ENCODE measurements at regions of chr17 and their contacts with region 1.

Region 1: GRCh38 chr17:47850692-47851573 is at the start of gene SP6:
- DNase-seq: peak; percentile 90
- ATAC-seq: peak; percentile 67
- H3K4me3 Mint-ChIP-seq: peak within 1 kb of the TSS; percentile 78
- H3K27ac Mint-ChIP-seq: no peak within 1 kb of the TSS
- H3K4me1 Mint-ChIP-seq: peaks cover 46% of the 10 kb centered on the region
- H3K27me3 Mint-ChIP-seq: peaks cover 92% of the 10 kb centered on the region
- CTCF ChIP-seq: no peak
- total RNA-seq, gene SP6: 2.0 to 3.3 TPM (median 2.3 TPM) in 3 replicates

Region 2: DNA sequence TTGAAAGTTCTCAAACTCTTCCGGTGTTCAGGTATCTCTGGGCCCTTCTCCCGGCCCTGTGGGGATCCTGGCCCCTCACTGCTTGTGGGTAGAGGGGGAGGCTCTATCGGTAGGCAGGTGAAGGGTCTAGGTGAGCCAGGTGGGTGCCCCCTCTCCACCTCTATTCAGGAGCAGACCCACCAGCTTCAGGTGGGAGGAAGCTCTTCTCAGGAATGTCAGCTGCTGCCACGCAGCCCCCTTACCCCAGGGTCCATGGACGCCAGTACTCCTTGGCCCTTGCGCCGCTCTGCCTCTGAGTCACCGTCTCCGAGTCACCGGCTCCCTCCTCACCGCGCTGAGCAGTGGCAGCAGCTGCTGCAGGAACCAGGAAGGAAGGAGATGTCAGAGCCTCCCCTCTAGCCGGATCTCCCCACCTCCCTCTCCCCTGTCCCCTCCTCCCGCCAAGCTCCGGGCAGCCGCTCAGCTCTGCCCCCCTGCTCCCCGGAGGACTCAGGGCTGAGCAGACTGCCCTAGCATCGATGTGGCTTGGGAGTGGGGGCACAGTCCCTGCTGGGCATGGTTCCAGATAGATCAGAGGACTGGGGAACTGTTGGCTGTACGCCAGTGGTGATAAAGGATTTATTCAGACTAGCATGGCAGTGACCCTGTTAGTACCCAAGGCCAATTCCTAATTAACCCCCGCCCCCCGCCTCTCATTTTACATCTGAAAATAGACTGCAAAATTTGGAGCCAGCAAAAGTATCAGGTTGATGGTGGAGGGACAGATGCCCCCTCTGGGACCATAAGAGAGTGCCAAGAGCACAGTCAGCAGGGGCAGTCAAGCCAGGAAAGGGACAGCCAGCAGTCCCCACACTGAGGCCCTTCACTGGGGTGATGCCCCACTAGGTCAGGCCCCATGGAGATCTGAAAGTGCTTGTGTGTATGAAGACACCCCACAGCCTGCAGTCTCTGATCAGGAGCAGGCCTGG is 29.2 kb before region 1 on chr17 and contains the start of gene OSBPL7:
- CTCF ChIA-PET with region 1: interaction called, 19 read pairs
- POLR2A ChIA-PET with region 1: no interaction called
- DNase-seq: peak; percentile 69
- ATAC-seq: peak; percentile 97
- H3K4me3 Mint-ChIP-seq: peak within 1 kb of the TSS; percentile 95
- H3K27ac Mint-ChIP-seq: no peak within 1 kb of the TSS; the same call in 1 of the 2 replicates
- H3K4me1 Mint-ChIP-seq: peaks cover 20% of the 10 kb centered on the region
- H3K27me3 Mint-ChIP-seq: no peaks in the 10 kb centered on the region
- CTCF ChIP-seq: no peak
- total RNA-seq, gene OSBPL7: 8.2 to 13.5 TPM (median 10.7 TPM) in 3 replicates

Region 3: GRCh38 chr17:47872021-47872650 is 21.2 kb after region 1 on chr17:
- CTCF ChIA-PET with region 1: interaction called, 94 read pairs
- POLR2A ChIA-PET with region 1: interaction called, 5 read pairs
- DNase-seq: peak; percentile 64
- ATAC-seq: peak; percentile 57
- H3K4me3 Mint-ChIP-seq: peak overlapping the region; percentile 70
- H3K27ac Mint-ChIP-seq: no peak overlapping the region
- H3K4me1 Mint-ChIP-seq: peaks cover 56% of the 10 kb centered on the region
- H3K27me3 Mint-ChIP-seq: peaks cover 75% of the 10 kb centered on the region
- CTCF ChIP-seq: no peak

Region 4: DNA sequence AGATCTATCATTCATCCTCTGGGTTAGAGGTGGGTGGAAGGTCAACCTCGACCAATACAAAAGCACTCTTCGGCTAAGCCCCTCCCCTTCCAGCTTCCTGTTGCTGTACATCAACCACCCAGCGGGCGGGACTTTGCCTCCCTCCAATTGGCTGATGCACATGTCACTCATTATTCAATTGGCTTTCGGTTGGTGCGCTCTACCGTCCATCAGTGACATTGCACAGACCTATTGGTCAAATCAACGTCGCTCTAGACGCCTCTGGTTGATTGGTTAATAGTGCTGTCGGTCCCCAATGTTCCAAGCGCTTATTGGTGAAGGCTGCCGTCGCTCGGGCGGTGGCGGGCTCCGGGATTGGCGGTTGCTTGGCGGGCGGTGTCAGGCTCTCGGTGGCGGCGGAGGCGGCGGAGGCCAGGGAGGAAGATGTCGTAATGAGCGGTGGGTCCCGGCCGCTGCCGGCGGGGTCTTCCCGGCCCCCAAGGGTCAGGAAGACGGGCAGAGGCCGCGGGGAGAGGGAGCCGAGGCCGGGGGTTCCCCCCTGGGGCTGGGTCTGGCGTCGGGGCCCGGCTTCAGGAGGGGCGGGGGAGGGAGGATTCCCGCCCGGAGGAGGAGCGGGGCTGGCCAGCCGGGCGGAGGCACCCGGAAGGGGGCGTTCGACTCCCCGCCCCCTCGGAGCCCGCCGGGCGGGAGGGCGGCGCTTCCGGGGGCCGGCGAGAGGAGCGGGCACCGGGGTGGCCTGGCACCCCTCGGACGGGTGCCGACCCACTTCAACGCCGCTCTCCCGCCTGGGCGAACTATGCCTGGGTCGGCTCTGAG is 45.1 kb after region 1 on chr17 and contains the start of gene SP2:
- CTCF ChIA-PET with region 1: interaction called, 1,122 read pairs
- POLR2A ChIA-PET with region 1: interaction called, 15 read pairs
- DNase-seq: peak; percentile 99
- ATAC-seq: peak; percentile 95
- H3K4me3 Mint-ChIP-seq: peak within 1 kb of the TSS; percentile 97
- H3K27ac Mint-ChIP-seq: peak within 1 kb of the TSS; percentile 96
- H3K4me1 Mint-ChIP-seq: peaks cover 37% of the 10 kb centered on the region
- H3K27me3 Mint-ChIP-seq: no peaks in the 10 kb centered on the region
- CTCF ChIP-seq: no peak
- total RNA-seq, gene SP2: 9.9 to 11.5 TPM (median 10.7 TPM) in 3 replicates

Region 5: DNA sequence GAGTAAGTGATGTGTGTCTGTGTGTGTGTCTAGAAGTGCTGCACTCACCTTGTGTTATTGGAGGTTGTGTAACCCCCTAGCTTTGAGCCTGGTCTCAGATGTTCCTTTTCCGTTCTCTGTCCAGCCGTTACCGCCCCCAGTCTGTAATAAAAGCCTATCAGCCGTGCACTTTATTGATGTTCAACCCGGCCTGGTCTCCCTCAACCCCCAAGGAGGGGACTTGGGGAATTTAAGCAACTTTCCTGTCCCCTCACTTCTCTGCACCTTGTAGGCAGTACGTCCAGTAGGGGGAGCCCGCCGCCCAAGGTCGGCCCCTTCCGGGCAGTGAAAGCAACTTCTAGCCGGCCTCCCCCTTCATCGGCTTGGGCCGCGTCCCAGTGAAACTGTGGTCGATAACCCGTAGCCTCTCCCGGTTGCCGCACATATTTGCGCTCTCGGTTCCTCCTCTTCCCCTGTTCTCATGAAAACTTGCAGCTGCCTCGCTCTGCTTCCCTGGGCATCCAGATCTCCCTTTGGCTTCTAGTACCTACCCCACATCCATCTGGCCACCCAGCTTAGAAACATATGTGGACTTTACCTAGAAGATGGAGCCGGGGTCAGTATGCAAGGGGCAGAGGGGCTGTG is 98.3 kb after region 1 on chr17:
- CTCF ChIA-PET with region 1: interaction called, 24 read pairs
- POLR2A ChIA-PET with region 1: interaction called, 3 read pairs
- DNase-seq: peak; percentile 98
- ATAC-seq: peak; percentile 88
- H3K4me3 Mint-ChIP-seq: peak overlapping the region; percentile 47
- H3K27ac Mint-ChIP-seq: peak overlapping the region; percentile 83
- H3K4me1 Mint-ChIP-seq: peaks cover 16% of the 10 kb centered on the region
- H3K27me3 Mint-ChIP-seq: no peaks in the 10 kb centered on the region
- CTCF ChIP-seq: peak; percentile 72

Region 6: GRCh38 chr17:48024937-48025906 is 174.3 kb after region 1 on chr17:
- CTCF ChIA-PET with region 1: interaction called, 13 read pairs
- POLR2A ChIA-PET with region 1: no interaction called
- DNase-seq: peak; percentile 98
- ATAC-seq: peak; percentile 62
- H3K4me3 Mint-ChIP-seq: peak overlapping the region; percentile 74
- H3K27ac Mint-ChIP-seq: no peak overlapping the region
- H3K4me1 Mint-ChIP-seq: peaks cover 25% of the 10 kb centered on the region
- H3K27me3 Mint-ChIP-seq: peaks cover 39% of the 10 kb centered on the region
- CTCF ChIP-seq: peak; percentile 71